ENCODE measurements at regions of chr1 and their contacts with region 1.

Region 1: DNA sequence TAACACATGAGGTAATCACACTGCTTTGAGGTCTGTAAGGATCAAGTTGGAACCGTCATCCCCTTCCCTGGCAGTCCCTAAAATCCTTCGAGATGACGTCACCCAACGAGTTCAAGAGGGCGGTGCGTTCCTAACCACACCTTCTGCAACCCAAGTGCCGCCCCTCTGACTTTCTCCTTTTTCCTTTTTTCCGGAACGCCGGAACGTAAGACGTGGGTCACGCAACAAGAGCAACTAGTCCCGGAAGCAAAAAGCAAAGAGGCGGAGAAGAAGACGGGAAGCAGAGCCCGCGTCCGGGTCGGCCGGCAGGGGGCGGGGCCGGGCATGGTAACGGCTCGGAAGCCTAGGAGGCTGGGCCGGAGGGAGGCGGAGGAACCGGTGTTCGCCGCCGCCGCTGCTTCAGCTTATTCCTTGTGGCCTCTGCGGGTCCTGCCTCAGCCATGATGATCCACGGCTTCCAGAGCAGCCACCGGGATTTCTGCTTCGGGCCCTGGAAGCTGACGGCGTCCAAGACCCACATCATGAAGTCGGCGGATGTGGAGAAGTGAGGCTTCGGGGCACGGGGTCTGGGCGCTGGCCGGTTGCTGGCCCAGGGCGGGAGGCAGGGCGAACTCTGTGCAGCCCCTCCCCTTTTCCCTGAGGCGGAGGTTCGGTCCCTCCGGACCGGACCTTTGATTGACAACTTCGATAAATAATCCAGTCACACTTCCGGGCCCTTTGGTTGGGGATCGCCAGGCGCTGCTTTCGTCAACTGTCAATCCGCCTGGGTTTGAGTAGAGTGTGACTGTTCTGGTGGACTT is at the start of gene TIPRL:
- DNase-seq: peak; percentile 99
- ATAC-seq: peak; percentile 93
- H3K4me3 ChIP-seq: peak within 1 kb of the TSS; percentile 74
- H3K27ac ChIP-seq: peak within 1 kb of the TSS; percentile 84
- H3K4me1 ChIP-seq: peaks cover 17% of the 10 kb centered on the region
- H3K27me3 ChIP-seq: no peaks in the 10 kb centered on the region
- CTCF ChIP-seq: peak; percentile 55
- total RNA-seq, gene TIPRL: 41.6 and 50.1 TPM in 2 replicates

Region 2: GRCh38 chr1:167936068-167936929 is 242.5 kb before region 1 on chr1 and contains the start of gene DCAF6:
- CTCF ChIA-PET with region 1: no interaction called
- POLR2A ChIA-PET with region 1: no interaction called
- intact Hi-C with region 1: loop called (anchors 5 kb)
- DNase-seq: peak; percentile 100
- ATAC-seq: peak; percentile 71
- H3K4me3 ChIP-seq: peak within 1 kb of the TSS; percentile 79
- H3K27ac ChIP-seq: peak within 1 kb of the TSS; percentile 88
- H3K4me1 ChIP-seq: peaks cover 22% of the 10 kb centered on the region
- H3K27me3 ChIP-seq: no peaks in the 10 kb centered on the region
- CTCF ChIP-seq: no peak
- total RNA-seq, gene DCAF6: 29.1 and 52.2 TPM in 2 replicates

Region 3: DNA sequence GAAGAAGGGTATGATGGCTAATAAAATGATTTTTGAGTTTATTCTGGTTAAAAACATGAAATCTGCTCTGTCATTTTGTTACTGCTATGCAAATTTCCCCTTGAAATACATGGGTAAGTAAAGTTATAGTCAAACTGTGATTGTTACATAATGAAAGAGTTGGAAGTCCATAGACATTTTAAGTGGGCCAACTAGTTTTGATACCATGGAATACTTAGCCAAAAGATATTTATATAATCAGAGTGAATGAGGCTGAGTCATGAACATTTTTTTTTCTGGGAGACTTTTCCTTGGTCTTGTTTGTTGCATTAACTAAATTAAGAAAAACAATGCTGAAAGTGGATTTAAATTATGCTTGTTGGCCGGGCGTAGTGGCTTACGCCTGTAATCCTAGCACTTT is 183.8 kb before region 1 on chr1:
- CTCF ChIA-PET with region 1: no interaction called
- POLR2A ChIA-PET with region 1: no interaction called
- intact Hi-C with region 1: no loop called
- DNase-seq: peak; percentile 5
- ATAC-seq: no peak
- H3K4me3 ChIP-seq: no peak overlapping the region
- H3K27ac ChIP-seq: no peak overlapping the region
- H3K4me1 ChIP-seq: peaks cover 12% of the 10 kb centered on the region
- H3K27me3 ChIP-seq: no peaks in the 10 kb centered on the region
- CTCF ChIP-seq: no peak

Region 4: DNA sequence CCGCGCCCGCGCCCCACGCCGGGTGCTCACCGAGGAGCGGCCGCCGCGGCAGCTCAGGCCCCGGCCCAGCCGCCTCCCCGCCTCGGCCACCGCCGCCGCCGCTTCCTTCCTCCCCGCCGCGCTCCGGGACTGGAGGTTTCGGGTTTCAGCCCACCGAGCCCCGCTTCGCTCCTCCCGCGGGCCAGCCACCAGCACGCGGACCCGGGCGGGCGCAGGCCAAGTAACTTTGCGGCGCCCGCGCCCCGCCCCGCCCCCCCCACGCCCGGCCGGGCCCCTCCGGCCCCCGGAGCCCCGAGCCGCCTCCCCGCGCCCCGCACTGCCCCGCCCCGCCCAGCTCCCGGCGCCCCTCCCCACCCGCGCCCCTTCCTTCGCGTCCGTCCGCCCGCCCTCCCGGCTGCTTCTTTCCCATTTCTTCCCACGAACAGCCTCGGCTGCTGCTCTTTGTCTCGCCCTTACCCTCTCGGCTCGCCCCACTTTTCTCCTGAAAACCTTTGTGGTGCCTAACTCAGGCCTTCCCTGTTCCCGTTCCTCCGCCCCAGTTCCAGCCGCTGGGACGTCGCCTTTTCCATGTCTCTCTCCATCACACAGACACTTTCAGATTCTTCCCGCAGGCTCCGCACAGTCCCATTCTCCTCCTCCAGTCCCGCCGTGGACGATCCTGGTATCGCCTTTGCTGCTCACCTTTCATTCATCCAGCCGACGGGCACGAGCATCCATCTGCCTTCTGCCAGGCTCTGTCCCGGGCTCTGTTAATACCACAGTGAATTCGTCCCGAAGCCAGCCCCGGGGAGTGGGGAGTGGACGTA is 41.9 kb before region 1 on chr1 and contains the start of gene GPR161:
- CTCF ChIA-PET with region 1: no interaction called
- POLR2A ChIA-PET with region 1: no interaction called
- intact Hi-C with region 1: loop called (anchors 1 kb)
- DNase-seq: peak; percentile 64
- ATAC-seq: peak; percentile 61
- H3K4me3 ChIP-seq: peak within 1 kb of the TSS; percentile 81
- H3K27ac ChIP-seq: 0 out of 2 replicates have a peak within 1 kb of the TSS, but pooled peaks have one; percentile 5
- H3K4me1 ChIP-seq: peaks cover 25% of the 10 kb centered on the region
- H3K27me3 ChIP-seq: no peaks in the 10 kb centered on the region
- CTCF ChIP-seq: no peak
- total RNA-seq, gene GPR161: 10.3 and 11.8 TPM in 2 replicates

Region 5: DNA sequence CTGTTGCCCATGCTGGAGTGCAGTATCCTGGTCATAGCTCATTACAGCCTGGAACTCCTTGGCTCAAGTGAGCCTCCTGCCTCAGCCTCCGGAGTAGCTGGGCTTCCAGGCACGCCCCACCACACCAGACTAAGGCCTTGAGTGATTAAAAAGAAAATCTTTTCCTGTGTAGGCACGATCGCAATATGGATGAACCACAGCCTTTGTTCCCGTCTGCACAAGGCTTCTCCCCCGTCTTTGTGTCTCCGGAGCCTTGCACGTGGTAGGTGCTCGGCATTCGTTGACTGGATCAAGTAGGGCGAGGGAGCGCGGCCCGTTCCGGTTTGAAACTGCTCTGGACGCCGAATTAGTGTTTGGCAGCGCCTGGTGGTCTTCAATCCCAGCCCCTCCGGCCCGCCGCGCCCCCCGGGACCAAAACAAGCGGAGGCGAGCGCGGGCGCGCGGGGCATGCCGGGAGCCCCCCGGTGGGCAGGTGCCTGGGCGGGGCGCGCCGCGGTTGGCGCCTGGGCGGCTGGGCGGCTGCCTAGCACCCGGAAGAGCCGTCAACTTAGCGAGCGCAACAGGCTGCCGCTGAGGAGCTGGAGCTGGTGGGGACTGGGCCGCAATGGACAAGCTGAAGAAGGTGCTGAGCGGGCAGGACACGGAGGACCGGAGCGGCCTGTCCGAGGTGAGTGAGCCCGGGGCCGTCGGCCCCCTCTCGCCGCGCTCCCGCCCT is 46.8 kb after region 1 on chr1 and contains the start of gene SFT2D2:
- CTCF ChIA-PET with region 1: no interaction called
- POLR2A ChIA-PET with region 1: no interaction called
- intact Hi-C with region 1: loop called (anchors 2 kb)
- DNase-seq: peak; percentile 85
- ATAC-seq: peak; percentile 91
- H3K4me3 ChIP-seq: peak within 1 kb of the TSS; percentile 89
- H3K27ac ChIP-seq: peak within 1 kb of the TSS; percentile 51
- H3K4me1 ChIP-seq: peaks cover 55% of the 10 kb centered on the region
- H3K27me3 ChIP-seq: no peaks in the 10 kb centered on the region
- CTCF ChIP-seq: no peak
- total RNA-seq, gene SFT2D2: 36.8 and 38.7 TPM in 2 replicates

Region 6: DNA sequence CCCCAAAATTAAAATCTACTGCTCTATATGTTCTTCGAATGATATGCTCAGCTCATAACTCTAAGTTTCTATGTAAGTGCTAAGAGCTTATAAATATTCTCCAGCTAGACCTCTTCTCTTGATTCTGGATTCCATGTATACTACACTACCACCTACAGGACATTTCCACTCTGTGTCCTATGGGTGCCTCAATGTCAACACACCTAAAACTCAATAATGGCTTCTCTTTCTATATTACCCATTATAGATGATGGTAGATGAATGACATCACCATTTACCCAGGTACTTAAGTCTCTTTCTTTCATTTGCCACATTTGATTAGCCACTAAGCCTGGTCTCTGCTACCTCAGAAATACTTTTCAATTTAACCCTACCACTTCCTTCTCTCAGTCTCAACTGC is 143.1 kb after region 1 on chr1:
- CTCF ChIA-PET with region 1: interaction called, 4 read pairs
- POLR2A ChIA-PET with region 1: no interaction called
- intact Hi-C with region 1: loop called (anchors 1 kb)
- DNase-seq: peak; percentile 75
- ATAC-seq: peak; percentile 79
- H3K4me3 ChIP-seq: no peak overlapping the region
- H3K27ac ChIP-seq: no peak overlapping the region
- H3K4me1 ChIP-seq: peaks cover 17% of the 10 kb centered on the region
- H3K27me3 ChIP-seq: no peaks in the 10 kb centered on the region
- CTCF ChIP-seq: peak; percentile 84

Measured in PC-3 (cell line).